IMR-90 (cell line): ENCODE measurements at regions of chr20 and their contacts with region 1.

Region 1: DNA sequence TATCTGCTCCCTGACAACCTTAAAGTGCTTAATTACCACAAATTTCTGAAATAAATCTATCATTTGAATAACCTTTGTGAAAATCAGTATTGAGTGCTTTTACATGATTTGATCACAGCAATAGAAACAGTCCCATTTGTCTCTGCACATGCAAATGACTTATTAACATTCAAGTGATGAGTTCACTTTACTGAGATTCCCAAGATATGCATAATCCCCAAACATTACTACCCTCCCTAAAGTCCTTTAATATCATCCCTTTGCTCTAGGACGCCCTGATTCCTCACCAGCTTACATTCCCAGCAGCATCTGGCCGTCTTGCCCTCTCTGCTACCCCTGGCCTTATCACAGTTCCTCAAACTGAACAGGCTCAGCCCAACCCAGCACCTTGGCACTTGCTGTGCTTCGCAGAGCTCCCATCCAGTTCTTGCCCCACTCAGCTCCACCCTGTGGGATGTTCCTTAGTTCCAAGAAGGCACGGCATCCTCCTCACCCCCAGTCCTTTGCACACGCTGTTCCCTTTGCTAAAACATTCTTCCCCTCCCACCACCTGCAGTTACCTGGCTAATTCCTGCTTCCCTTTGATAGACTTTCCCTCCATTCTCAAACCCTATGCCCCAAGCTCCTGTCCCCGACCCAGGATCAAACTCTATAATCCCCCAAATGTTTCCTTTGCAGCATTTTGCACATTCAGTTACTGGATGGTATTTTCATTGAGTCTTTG is 347.4 kb downstream of the PREX1 start:
- DNase-seq: no peak
- ATAC-seq: no peak
- H3K4me3 ChIP-seq: no peak overlapping the region
- H3K27ac ChIP-seq: no peak overlapping the region
- H3K4me1 ChIP-seq: no peaks in the 10 kb centered on the region
- H3K27me3 ChIP-seq: peaks cover 5% of the 10 kb centered on the region
- CTCF ChIP-seq: no peak
- POLR2A ChIP-seq: no peak
- RAD21 ChIP-seq: no peak

Region 2: DNA sequence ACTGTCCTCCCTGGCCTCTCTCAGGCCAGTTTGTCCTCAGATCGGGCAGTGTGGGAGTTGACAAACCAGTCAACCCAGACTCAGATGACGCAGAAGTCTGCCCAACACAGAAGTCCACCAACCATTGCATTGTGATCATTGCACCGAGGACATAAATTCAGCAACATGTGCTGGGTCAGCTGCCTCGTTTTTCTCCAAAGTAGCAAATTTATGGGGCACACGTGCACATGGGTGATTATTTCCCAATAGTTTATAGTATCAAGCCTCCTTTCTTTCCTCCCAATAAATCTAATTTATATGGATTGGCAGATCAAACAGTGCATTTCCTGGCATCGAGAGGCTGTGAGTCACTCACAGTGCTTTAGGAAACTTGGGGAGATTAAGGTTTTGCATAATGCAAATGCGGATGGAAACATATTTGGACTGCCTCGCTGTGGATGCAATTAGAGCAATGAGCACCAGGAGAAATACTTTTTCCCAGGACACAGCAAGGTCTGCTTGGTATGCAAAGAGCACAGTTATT is 281.4 kb before region 1 on chr20:
- CTCF ChIA-PET with region 1: no interaction called
- POLR2A ChIA-PET with region 1: no interaction called
- dilution Hi-C with region 1: no loop called
- in situ Hi-C with region 1: no loop called
- intact Hi-C with region 1: no loop called
- DNase-seq: no peak
- ATAC-seq: no peak
- H3K4me3 ChIP-seq: no peak overlapping the region
- H3K27ac ChIP-seq: no peak overlapping the region
- H3K4me1 ChIP-seq: no peaks in the 10 kb centered on the region
- H3K27me3 ChIP-seq: peaks cover 5% of the 10 kb centered on the region; the same call in 1 of the 2 replicates
- CTCF ChIP-seq: no peak
- POLR2A ChIP-seq: no peak
- RAD21 ChIP-seq: no peak

Region 3: GRCh38 chr20:48447465-48447864 is 32.9 kb before region 1 on chr20:
- CTCF ChIA-PET with region 1: no interaction called
- POLR2A ChIA-PET with region 1: no interaction called
- dilution Hi-C with region 1: no loop called
- in situ Hi-C with region 1: no loop called
- intact Hi-C with region 1: loop called (anchors 1 kb)
- DNase-seq: no peak
- ATAC-seq: no peak
- H3K4me3 ChIP-seq: no peak overlapping the region
- H3K27ac ChIP-seq: no peak overlapping the region
- H3K4me1 ChIP-seq: no peaks in the 10 kb centered on the region
- H3K27me3 ChIP-seq: no peaks in the 10 kb centered on the region
- CTCF ChIP-seq: no peak
- POLR2A ChIP-seq: no peak
- RAD21 ChIP-seq: no peak

Region 4: DNA sequence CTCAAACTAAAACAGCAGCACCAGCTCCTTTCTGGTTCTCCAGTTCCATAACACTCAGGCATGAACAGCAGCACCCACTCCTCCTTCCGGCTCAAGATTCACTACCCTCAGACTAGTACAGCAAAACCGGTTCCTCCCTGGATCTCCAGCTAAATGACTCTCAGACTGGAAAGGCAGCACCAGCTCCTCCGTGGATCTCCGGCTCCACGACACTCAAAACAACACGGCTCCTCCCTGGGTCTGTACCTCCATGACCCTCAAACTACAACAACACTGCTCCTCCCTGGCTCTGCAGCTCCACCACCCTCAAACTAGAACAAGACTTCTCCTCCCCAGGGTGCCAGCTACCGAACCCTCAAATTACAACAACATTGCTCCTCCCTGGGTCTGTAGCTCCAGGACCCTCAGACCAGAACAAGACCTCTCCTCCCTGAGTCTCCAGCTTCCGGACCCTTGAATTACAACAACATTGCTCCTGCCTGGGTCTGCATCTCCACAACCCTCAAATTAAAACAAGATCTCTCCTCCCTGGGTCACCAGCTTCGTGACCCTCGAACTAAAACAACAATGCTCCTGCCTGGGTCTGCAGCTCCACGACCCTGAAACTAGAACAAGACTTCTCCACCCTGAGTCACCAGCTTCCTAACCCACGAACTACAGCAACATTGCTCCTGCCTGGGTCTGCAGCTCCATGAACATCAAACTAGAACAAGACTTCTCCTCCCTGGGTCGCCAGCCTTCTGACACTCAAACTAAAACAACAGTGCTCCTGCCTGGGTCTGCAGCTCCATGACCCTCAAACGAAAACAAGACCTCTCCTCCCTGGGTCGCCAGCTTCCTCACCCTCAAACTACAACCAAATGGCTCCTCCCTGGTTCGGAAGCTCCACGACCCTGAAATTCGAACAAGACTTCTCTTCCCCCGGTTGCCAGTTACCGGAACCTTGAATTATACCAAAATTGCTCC is 22.8 kb after region 1 on chr20:
- CTCF ChIA-PET with region 1: no interaction called
- POLR2A ChIA-PET with region 1: no interaction called
- dilution Hi-C with region 1: no loop called
- in situ Hi-C with region 1: no loop called
- intact Hi-C with region 1: no loop called
- DNase-seq: no peak
- ATAC-seq: no peak
- H3K4me3 ChIP-seq: no peak overlapping the region
- H3K27ac ChIP-seq: no peak overlapping the region
- H3K4me1 ChIP-seq: no peaks in the 10 kb centered on the region
- H3K27me3 ChIP-seq: no peaks in the 10 kb centered on the region
- CTCF ChIP-seq: no peak
- POLR2A ChIP-seq: no peak
- RAD21 ChIP-seq: no peak

Region 5: DNA sequence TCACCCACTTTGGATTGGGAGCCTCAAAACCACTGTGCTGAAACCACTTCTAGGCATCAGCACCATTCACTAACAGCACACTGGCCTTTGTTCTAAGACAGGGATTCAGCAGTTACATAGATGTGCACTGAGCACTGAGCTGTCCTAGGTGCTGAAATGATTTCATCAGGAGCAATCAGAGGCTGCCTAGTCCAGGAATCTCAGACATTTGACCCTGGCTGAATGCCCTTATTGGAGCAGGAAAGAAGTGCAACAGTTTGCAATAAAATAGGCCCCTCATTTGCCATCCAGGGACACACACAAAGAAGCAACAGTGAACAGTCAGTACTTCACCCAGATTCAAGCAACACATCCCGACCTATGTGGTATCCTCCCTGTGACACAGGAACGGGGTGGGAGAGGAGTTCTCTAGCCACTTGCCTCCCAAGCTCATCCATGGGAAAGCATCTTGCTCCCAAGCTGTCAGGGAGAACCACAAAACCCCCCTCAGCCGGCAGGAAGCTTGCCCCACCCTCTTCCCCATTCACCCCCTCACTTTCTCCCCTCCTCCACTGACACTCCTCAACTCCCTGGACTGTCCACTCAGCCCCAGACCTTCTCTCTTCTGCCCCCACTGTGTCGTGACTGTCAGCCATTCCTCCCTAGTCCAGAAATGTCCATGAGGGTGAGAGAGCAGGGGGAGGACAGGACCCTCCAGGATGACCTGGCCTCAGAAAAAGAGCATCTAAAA is 43.0 kb after region 1 on chr20:
- CTCF ChIA-PET with region 1: no interaction called
- POLR2A ChIA-PET with region 1: no interaction called
- dilution Hi-C with region 1: no loop called
- in situ Hi-C with region 1: no loop called
- intact Hi-C with region 1: no loop called
- DNase-seq: peak; percentile 59
- ATAC-seq: peak; percentile 83
- H3K4me3 ChIP-seq: no peak overlapping the region
- H3K27ac ChIP-seq: no peak overlapping the region
- H3K4me1 ChIP-seq: no peaks in the 10 kb centered on the region
- H3K27me3 ChIP-seq: no peaks in the 10 kb centered on the region
- CTCF ChIP-seq: no peak
- POLR2A ChIP-seq: no peak
- RAD21 ChIP-seq: no peak